Activated CD4-positive, alpha-beta T cell treated with anti-CD3 and anti-CD28 coated beads for 36 hours (primary cell): ENCODE measurements at regions of chr16 and their contacts with region 1.

Region 1: GRCh38 chr16:49315602-49316001 is 34.0 kb upstream of the CBLN1 start:
- DNase-seq: no peak
- ATAC-seq: no peak
- H3K4me3 Mint-ChIP-seq: no peak overlapping the region
- H3K27ac Mint-ChIP-seq: no peak overlapping the region
- H3K4me1 Mint-ChIP-seq: no peaks in the 10 kb centered on the region
- H3K27me3 Mint-ChIP-seq: peaks cover 17% of the 10 kb centered on the region

Region 2: GRCh38 chr16:49292413-49292812 is 23.2 kb before region 1 on chr16:
- CTCF ChIA-PET with region 1: no interaction called
- POLR2A ChIA-PET with region 1: interaction called, 11 read pairs
- intact Hi-C with region 1: no loop called
- DNase-seq: no peak
- ATAC-seq: no peak
- H3K4me3 Mint-ChIP-seq: no peak overlapping the region
- H3K27ac Mint-ChIP-seq: no peak overlapping the region
- H3K4me1 Mint-ChIP-seq: no peaks in the 10 kb centered on the region
- H3K27me3 Mint-ChIP-seq: peaks cover 16% of the 10 kb centered on the region

Region 3: DNA sequence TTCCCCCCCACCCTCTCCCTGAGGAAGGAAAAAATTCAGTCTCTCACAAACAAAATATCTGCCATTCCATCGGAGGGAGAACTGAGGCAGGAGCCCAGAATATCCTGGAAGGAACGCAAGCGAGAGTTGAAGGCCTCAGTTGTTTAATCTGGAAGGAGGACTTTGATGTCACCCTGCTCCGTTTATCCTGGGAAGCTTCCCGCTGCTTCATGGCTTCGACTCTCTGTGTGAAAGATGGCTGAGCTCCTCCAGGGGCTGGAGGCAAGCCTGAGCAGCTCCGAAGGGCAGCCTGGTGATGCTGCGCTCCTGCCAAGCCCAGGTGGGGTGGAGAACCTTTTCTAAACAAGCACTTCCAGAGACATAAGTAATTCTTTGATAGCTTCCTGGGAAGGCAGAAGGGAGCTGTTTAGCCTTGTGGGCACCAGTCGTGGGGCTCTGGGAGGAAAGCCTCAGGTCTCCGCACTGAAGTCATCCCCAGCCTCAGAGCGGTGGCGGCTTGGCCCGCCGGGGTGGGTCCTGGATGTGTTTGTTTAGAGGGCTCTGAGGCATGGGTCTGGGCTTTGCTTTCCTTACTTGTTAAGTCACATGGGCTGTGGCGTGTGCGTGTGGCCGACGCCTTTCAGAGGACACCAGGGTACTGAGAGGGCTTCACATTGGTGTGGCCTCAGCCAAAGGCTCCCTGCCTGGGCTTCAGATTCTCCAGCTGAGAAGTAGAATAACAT is 1240.5 kb after region 1 on chr16:
- CTCF ChIA-PET with region 1: no interaction called
- POLR2A ChIA-PET with region 1: no interaction called
- intact Hi-C with region 1: no loop called
- DNase-seq: no peak
- ATAC-seq: no peak
- H3K4me3 Mint-ChIP-seq: no peak overlapping the region
- H3K27ac Mint-ChIP-seq: no peak overlapping the region
- H3K4me1 Mint-ChIP-seq: peaks cover 4% of the 10 kb centered on the region
- H3K27me3 Mint-ChIP-seq: no peaks in the 10 kb centered on the region